Head of caudate nucleus (tissue), 42 donors: ENCODE measurements at regions of chr6 and their contacts with region 1.

Region 1: GRCh38 chr6:136784910-136785746 is 7.1 kb downstream of the MAP3K5 start:
- DNase-seq: peak in 33 of 42 donors; percentile 24 to 76 (median 45)

Region 2: GRCh38 chr6:136745300-136745699 is 39.8 kb before region 1 on chr6:
- intact Hi-C with region 1: loop called (anchors 5 kb)
- DNase-seq: peak in 10 of 42 donors; percentile 22 to 66 (median 48)